ENCODE measurements at regions of chr6 and their contacts with region 1.

Region 1: DNA sequence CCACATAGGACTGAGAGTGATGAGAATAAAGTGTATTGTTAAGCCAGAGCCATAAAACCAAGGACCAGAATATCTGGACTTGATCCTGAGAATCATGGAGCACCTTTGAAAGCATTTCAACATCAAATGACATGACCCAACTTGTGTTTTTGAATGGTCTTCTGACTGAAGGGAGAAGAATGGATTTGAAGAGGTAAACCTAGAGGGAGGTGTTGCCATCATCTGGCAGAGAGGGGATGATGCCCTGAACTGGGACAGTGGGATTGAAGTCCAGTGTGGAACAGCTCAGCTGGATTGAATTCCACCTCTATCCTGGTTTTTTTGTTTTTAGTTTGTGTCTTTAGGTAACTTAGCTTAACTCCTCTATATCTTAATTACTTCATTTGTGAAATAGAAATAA is 570.0 kb downstream of the TBC1D32 start:
- DNase-seq: peak; percentile 26
- H3K4me3 ChIP-seq: no peak overlapping the region
- H3K27ac ChIP-seq: no peak overlapping the region
- H3K4me1 ChIP-seq: no peaks in the 10 kb centered on the region
- H3K27me3 ChIP-seq: peaks cover 2% of the 10 kb centered on the region
- CTCF ChIP-seq: peak; percentile 34 to 74

Region 2: DNA sequence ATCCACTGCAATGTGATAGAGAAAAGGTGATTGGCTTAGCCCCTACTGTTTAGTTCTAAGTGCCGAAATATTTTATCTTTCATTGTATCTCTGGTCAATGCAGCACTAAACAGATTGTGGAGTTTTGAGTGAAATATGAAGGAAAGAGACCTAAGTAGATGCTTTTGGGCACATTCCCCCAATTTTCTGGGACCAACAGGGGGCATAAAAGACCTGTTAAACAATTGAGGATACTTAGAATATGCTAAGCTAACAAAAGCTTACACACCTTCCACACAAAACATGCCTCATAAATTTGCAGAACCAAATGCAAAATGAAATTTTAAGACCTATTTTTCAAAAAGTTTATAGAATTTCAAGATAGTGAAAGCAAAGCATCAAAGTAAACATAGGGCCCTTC is 176.9 kb before region 1 on chr6:
- CTCF ChIA-PET with region 1: no interaction called
- dilution Hi-C with region 1: no loop called
- in situ Hi-C with region 1: no loop called
- intact Hi-C with region 1: loop called (anchors 1 kb)
- DNase-seq: no peak
- H3K4me3 ChIP-seq: no peak overlapping the region
- H3K27ac ChIP-seq: no peak overlapping the region
- H3K4me1 ChIP-seq: no peaks in the 10 kb centered on the region
- H3K27me3 ChIP-seq: no peaks in the 10 kb centered on the region
- CTCF ChIP-seq: peak; percentile 6 to 33